CD8-positive, alpha-beta memory T cell (primary cell): ENCODE measurements at regions of chr9 and their contacts with region 1.

Region 1: GRCh38 chr9:37784616-37785483 is at the start of gene EXOSC3:
- DNase-seq: peak; percentile 80 to 89 (median 82)
- H3K4me3 ChIP-seq: peak within 1 kb of the TSS; percentile 93
- H3K4me3 Mint-ChIP-seq: peak within 1 kb of the TSS; percentile 96 to 100 (median 97)
- H3K27ac ChIP-seq: peak within 1 kb of the TSS; percentile 76
- H3K27ac Mint-ChIP-seq: peak within 1 kb of the TSS; percentile 95 to 99 (median 97)
- H3K4me1 ChIP-seq: peaks cover 22% of the 10 kb centered on the region
- H3K4me1 Mint-ChIP-seq: peaks cover 38 to 47% (median 47%) of the 10 kb centered on the region in 3 donors
- H3K27me3 ChIP-seq: no peaks in the 10 kb centered on the region
- H3K27me3 Mint-ChIP-seq: peaks cover 0 to 7% of the 10 kb centered on the region in 2 donors
- total RNA-seq, gene EXOSC3: 107 to 112 TPM

Region 2: GRCh38 chr9:37732086-37732741 is 52.6 kb before region 1 on chr9:
- CTCF ChIA-PET with region 1: no interaction called
- POLR2A ChIA-PET with region 1: no interaction called
- DNase-seq: no peak
- H3K4me3 ChIP-seq: no peak overlapping the region
- H3K4me3 Mint-ChIP-seq: no peak overlapping the region
- H3K27ac ChIP-seq: no peak overlapping the region
- H3K27ac Mint-ChIP-seq: no peak overlapping the region
- H3K4me1 ChIP-seq: no peaks in the 10 kb centered on the region
- H3K4me1 Mint-ChIP-seq: no peaks in the 10 kb centered on the region
- H3K27me3 ChIP-seq: no peaks in the 10 kb centered on the region
- H3K27me3 Mint-ChIP-seq: peaks cover 10 to 30% of the 10 kb centered on the region in 2 donors

Region 3: GRCh38 chr9:37800631-37801286 is 15.9 kb after region 1 on chr9 and contains the start of gene DCAF10:
- CTCF ChIA-PET with region 1: interaction called, 10 read pairs
- POLR2A ChIA-PET with region 1: interaction called, 10 read pairs
- DNase-seq: peak; percentile 78 to 90 (median 85)
- H3K4me3 ChIP-seq: peak within 1 kb of the TSS; percentile 92
- H3K4me3 Mint-ChIP-seq: peak within 1 kb of the TSS; percentile 91 to 99 (median 94)
- H3K27ac ChIP-seq: peak within 1 kb of the TSS; percentile 65
- H3K27ac Mint-ChIP-seq: peak within 1 kb of the TSS; percentile 44 to 95 (median 92)
- H3K4me1 ChIP-seq: peaks cover 32% of the 10 kb centered on the region
- H3K4me1 Mint-ChIP-seq: peaks cover 36 to 50% (median 46%) of the 10 kb centered on the region in 3 donors
- H3K27me3 ChIP-seq: no peaks in the 10 kb centered on the region
- H3K27me3 Mint-ChIP-seq: no peaks in the 10 kb centered on the region
- total RNA-seq, gene DCAF10: 14.9 to 15.1 TPM